OCI-LY7 (cell line): ENCODE measurements at regions of chr2 and their contacts with region 1.

Region 1: DNA sequence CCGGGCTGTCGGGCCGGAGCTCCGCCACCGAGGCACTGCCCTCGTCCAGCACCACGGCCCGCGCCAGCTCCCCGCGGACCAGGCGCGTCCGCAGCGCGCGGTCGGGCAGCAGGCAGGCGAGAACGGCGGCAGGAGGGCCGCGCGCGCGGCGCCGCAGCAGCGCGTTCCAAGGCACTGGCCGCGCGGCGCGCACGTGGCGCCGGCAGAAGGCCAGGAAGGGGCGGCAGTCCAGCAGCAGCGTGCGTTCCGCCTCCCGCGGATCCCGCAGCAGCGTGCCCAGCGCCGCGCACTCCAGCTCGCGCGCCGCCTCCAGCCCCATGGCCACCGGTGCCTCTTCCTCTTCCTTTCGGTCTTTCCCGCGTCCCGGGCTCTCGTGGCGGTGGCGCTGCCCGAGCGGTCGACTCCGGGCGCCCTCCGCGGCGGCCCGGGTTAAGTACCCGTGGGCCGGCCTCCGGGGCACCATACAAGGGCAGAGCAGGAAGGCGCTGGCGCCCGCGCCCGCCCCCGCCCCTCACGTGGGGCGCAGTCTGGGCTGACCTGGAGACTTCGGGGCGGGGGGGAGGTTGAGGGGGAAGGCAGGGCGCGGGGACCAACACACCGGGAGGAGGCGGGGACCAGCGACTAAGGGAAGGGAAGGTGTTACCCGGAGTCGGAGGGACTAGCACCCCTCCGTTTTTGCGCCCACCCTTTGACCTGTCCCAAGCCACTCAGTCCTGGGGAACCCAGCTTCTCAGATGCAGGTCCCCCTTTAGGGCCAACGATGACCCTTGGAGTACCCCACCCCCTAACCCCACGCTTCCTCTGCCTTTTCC is at the start of gene DUSP2:
- DNase-seq: peak; percentile 90
- H3K4me3 ChIP-seq: peak within 1 kb of the TSS; percentile 97
- H3K27ac ChIP-seq: peak within 1 kb of the TSS; percentile 97
- H3K4me1 ChIP-seq: peaks cover 68% of the 10 kb centered on the region
- CTCF ChIP-seq: no peak
- total RNA-seq, gene DUSP2: 94.7 and 110 TPM in 2 replicates

Region 2: DNA sequence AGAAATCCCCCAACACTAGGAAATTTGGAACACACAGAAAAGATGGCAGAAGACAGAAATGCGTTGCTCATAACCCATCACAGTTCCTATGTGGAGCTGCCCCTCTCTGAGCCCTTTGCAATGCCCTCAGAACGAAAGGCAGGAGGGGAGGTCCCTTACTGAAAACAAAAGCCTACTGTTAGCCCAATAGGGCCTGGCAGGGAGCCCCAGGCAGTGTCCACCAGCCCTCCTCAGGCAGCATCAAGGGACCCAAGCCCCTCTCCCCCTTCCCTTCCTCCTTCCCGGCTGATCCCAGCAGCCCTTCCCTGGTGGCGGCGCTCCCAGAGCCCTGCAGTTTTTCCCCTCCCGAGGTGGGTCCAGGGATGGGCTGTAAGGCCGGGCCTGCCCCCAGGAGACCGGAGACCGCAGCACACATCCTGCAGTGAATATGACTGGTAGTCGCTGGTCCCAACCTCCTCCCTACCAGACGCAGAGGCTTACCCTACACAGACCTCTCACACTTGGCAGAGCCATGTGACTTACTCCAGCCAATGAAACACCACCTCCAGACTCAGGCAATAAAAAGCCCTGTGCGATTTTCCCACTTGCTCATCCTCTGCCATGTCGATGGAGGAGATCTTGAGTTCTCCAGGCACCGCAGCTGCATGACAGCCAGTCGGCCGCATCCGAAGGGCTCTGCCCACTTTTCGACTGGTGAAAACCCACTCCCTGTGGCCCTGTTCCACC is 19.4 kb after region 1 on chr2:
- CTCF ChIA-PET with region 1: interaction called, 18 read pairs
- POLR2A ChIA-PET with region 1: interaction called, 10 read pairs
- intact Hi-C with region 1: loop called (anchors 1 kb)
- DNase-seq: peak; percentile 93
- H3K4me3 ChIP-seq: peak overlapping the region; percentile 67
- H3K27ac ChIP-seq: peak overlapping the region; percentile 99
- H3K4me1 ChIP-seq: peaks cover 65% of the 10 kb centered on the region
- CTCF ChIP-seq: peak; percentile 31; the same call in 1 of the 2 replicates

Region 3: DNA sequence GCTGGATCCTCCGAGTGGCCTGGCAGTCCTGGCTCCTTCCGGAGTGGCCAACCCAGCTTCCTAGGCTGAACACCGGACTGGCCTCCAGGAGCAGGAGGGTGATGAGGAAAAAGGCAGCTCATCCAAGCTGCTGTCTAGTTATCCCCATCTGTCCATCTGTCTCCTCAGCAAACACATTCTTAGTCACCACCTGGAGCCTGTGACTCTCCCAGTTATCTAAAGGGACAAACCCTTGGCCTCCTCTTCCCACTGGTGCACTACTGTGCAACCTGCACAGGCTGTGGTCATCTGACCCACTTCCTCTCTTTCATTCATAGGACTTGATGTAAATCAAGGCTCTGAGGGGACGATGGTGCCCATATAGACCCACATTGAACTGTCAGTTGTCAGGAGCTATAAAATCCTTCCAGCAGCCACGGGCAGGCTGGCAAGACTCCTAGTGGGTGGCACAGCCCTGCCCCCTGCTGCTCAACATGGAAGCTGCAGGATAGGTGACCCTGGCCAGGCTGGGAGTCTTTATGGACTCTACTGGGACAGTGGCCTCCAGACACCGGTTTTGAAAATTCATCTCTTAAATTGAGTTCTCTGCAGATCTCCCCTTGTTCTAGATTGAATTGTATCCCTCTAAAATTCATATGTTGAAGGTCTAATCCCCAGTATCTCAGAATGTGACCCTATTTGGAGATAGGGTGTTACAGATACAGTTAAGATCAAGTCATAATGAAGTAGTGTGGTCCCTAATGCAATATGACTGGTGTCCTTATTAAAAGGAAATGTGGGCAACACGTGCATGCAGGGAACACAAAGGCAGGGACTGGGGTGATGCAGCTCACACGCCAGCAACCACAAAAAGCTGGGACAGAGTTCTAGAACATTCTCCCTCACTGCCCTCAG is 29.3 kb after region 1 on chr2:
- CTCF ChIA-PET with region 1: interaction called, 22 read pairs
- POLR2A ChIA-PET with region 1: interaction called, 23 read pairs
- intact Hi-C with region 1: loop called (anchors 1 kb)
- DNase-seq: peak; percentile 87
- H3K4me3 ChIP-seq: no peak overlapping the region
- H3K27ac ChIP-seq: no peak overlapping the region
- H3K4me1 ChIP-seq: peaks cover 7% of the 10 kb centered on the region
- CTCF ChIP-seq: peak; percentile 99

Region 4: DNA sequence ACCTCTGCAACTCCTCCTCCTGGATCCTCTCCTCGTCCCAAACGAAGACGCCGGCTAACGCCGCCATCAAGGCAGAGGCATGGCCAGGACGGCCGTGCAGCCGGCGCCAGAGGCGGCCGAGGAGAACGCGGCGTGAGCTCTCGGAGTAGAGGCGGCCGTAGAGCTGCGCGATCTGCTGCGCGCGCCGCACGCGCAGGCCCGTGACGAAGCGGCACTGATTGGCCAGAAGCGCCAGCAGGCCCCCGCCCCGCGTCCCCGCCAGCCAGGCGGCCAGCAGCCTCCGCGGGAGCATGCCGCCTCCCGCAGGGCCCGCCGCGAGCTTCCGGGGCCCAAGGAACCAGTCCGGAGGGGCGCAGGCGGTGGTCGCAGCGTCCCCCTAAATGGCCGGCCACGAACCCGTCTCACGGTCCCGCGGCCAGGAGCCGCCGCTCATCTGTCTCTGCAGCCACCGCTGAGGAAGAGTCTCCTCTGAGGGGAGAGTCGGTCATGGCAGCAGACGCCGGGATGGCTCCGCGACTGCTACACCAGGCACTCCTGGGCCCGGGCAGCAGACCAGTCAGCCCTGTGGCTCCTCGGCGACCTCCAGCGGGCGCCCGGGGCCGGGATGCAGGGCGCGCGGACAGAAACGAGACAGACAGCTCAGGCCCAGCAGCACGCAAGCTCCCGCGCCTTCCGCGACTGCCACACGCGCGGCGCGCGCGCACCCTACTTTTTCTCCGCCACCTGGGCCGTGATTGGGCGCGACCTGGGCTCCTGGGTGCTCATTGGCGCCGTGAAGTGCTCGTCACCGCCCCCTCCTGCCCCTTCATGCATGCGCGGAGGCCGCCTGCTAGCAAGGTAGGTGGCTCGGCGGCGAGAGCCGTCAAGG is 63.1 kb after region 1 on chr2 and contains the start of gene STARD7:
- CTCF ChIA-PET with region 1: interaction called, 8 read pairs
- POLR2A ChIA-PET with region 1: interaction called, 6 read pairs
- intact Hi-C with region 1: loop called (anchors 1 kb)
- DNase-seq: peak; percentile 99
- H3K4me3 ChIP-seq: peak within 1 kb of the TSS; percentile 90
- H3K27ac ChIP-seq: peak within 1 kb of the TSS; percentile 81
- H3K4me1 ChIP-seq: peaks cover 64% of the 10 kb centered on the region
- CTCF ChIP-seq: peak; percentile 30; the same call in 1 of the 2 replicates
- total RNA-seq, gene STARD7: 208 and 239 TPM in 2 replicates

Region 5: GRCh38 chr2:96241900-96242611 is 96.8 kb after region 1 on chr2:
- CTCF ChIA-PET with region 1: no interaction called
- POLR2A ChIA-PET with region 1: interaction called, 7 read pairs
- intact Hi-C with region 1: loop called (anchors 5 kb)
- DNase-seq: peak; percentile 79
- H3K4me3 ChIP-seq: peak overlapping the region; percentile 58
- H3K27ac ChIP-seq: peak overlapping the region; percentile 89
- H3K4me1 ChIP-seq: peaks cover 64% of the 10 kb centered on the region
- CTCF ChIP-seq: no peak

Region 6: GRCh38 chr2:96554293-96555145 is 409.3 kb after region 1 on chr2:
- CTCF ChIA-PET with region 1: no interaction called
- POLR2A ChIA-PET with region 1: no interaction called
- intact Hi-C with region 1: no loop called
- DNase-seq: peak; percentile 69
- H3K4me3 ChIP-seq: no peak overlapping the region
- H3K27ac ChIP-seq: no peak overlapping the region
- H3K4me1 ChIP-seq: no peaks in the 10 kb centered on the region
- CTCF ChIP-seq: peak; percentile 91

Region 7: GRCh38 chr2:96888072-96889011 is 743.1 kb after region 1 on chr2:
- CTCF ChIA-PET with region 1: no interaction called
- POLR2A ChIA-PET with region 1: no interaction called
- intact Hi-C with region 1: no loop called
- DNase-seq: no peak
- H3K4me3 ChIP-seq: no peak overlapping the region
- H3K27ac ChIP-seq: no peak overlapping the region
- H3K4me1 ChIP-seq: peaks cover 18% of the 10 kb centered on the region
- CTCF ChIP-seq: no peak